ENCODE measurements at regions of chr1 and their contacts with region 1.

Region 1: GRCh38 chr1:89804642-89805237 is 16.1 kb upstream of the LRRC8D start:
- DNase-seq: peak; percentile 77
- ATAC-seq: peak; percentile 97

Region 2: DNA sequence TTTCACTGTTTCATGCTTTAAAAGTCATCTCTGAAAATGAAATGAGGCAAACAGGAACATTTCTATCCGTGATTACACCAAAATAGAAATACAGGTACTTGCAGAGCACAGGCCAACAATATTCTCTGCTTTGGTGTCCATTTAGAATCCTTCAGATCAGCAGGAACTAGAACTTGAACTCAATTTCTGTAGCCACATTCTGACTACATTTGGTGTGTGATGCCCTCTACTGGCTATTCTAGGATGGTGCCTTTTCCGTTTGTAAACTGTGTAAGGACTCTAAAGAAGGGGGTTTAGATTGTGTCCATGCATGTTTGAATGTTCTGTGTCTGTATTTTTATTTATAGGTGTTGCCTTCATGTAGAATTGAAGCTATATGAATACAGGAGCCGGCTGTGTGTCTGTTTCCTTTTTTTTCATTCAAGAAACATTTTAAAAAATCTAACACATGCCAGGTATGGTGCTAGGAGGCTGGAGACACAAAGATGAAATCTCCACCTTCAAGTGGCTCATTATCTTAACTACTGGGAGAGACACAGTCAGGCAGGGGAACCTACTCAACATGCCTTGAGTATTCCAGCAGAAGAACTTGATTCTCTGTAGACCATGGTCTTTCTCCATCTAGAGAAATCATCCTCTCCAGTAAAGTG is 182.6 kb after region 1 on chr1:
- intact Hi-C with region 1: loop called (anchors 2 kb)
- DNase-seq: no peak
- ATAC-seq: peak; percentile 92